Activated naive CD4-positive, alpha-beta T cell treated with anti-CD3 and anti-CD28 coated beads, Interleukin-2, amount 10 ng/mL, durations not matched to agents 7 days and 5 days (primary cell): ENCODE measurements at regions of chr1 and their contacts with region 1.

Region 1: DNA sequence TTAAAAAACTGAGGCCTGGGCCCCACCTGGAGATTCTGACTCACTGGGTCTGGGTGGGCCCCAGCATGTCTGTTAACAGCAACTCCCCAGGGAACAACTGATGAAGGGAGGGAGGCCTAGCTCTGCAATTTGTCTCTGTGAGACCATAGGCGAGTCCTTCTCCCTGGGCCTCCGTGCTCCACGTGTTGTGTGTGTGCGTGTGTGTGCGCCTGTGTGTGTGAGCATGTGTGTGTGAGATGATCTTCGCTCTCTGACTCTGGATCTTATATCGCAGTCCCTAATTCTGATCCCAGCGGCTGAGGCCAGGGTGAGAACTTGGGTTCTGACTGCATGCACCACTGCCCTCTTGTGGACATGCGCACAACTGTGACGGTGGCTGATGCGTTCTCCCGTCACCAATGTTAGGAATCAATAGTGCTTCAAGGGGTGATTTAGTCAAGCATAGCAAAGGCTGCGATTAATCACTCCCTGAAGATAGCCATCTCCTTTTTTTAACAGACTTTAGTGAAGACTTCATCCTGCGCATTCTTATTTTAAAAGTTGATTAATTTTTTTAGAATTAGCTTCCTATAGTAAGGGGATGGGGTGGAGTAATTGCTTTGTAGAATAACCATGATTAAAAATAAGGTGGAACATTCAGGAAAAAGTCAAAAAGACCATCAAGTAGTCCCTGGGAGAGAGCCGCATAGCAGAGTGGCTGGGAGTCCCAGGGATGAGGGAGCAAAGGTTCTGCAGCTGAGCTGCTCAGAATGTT is 62.4 kb upstream of the USP24 start:
- DNase-seq: peak; percentile 89
- H3K4me3 Mint-ChIP-seq: no peak overlapping the region
- H3K27ac Mint-ChIP-seq: no peak overlapping the region
- H3K4me1 Mint-ChIP-seq: peaks cover 12% of the 10 kb centered on the region
- H3K27me3 Mint-ChIP-seq: peaks cover 10% of the 10 kb centered on the region

Region 2: GRCh38 chr1:55050283-55050682 is 227.3 kb before region 1 on chr1:
- CTCF ChIA-PET with region 1: no interaction called
- DNase-seq: no peak
- H3K4me3 Mint-ChIP-seq: no peak overlapping the region
- H3K27ac Mint-ChIP-seq: no peak overlapping the region
- H3K4me1 Mint-ChIP-seq: no peaks in the 10 kb centered on the region
- H3K27me3 Mint-ChIP-seq: peaks cover 14% of the 10 kb centered on the region

Region 3: GRCh38 chr1:55140546-55140983 is 137.0 kb before region 1 on chr1:
- CTCF ChIA-PET with region 1: interaction called, 33 read pairs
- DNase-seq: peak; percentile 80
- H3K4me3 Mint-ChIP-seq: no peak overlapping the region
- H3K27ac Mint-ChIP-seq: peak overlapping the region; percentile 78
- H3K4me1 Mint-ChIP-seq: peaks cover 13% of the 10 kb centered on the region
- H3K27me3 Mint-ChIP-seq: no peaks in the 10 kb centered on the region

Region 4: GRCh38 chr1:55146781-55147180 is 130.8 kb before region 1 on chr1:
- CTCF ChIA-PET with region 1: interaction called, 33 read pairs
- DNase-seq: no peak
- H3K4me3 Mint-ChIP-seq: no peak overlapping the region
- H3K27ac Mint-ChIP-seq: peak overlapping the region; percentile 49
- H3K4me1 Mint-ChIP-seq: peaks cover 12% of the 10 kb centered on the region
- H3K27me3 Mint-ChIP-seq: no peaks in the 10 kb centered on the region